Dendritic cell treated with granulocyte-macrophage colony-stimulating factor and Interleukin-4, amounts not matched to agents 40 ng/mL and 50 ng/mL, for 4 days (primary cell): ENCODE measurements at regions of chr22 and their contacts with region 1.

Region 1: GRCh38 chr22:38872172-38872830 is at the start of gene CBX6:
- H3K4me3 Mint-ChIP-seq: peak within 1 kb of the TSS; percentile 94
- H3K27ac Mint-ChIP-seq: peak within 1 kb of the TSS; percentile 98
- H3K4me1 Mint-ChIP-seq: peaks cover 50% of the 10 kb centered on the region
- H3K27me3 Mint-ChIP-seq: peaks cover 20% of the 10 kb centered on the region

Region 2: GRCh38 chr22:38927033-38927781 is 54.9 kb after region 1 on chr22:
- intact Hi-C with region 1: loop called (anchors 5 kb)
- H3K4me3 Mint-ChIP-seq: peak overlapping the region; percentile 47
- H3K27ac Mint-ChIP-seq: peak overlapping the region; percentile 5
- H3K4me1 Mint-ChIP-seq: peaks cover 12% of the 10 kb centered on the region
- H3K27me3 Mint-ChIP-seq: peaks cover 64% of the 10 kb centered on the region

Region 3: DNA sequence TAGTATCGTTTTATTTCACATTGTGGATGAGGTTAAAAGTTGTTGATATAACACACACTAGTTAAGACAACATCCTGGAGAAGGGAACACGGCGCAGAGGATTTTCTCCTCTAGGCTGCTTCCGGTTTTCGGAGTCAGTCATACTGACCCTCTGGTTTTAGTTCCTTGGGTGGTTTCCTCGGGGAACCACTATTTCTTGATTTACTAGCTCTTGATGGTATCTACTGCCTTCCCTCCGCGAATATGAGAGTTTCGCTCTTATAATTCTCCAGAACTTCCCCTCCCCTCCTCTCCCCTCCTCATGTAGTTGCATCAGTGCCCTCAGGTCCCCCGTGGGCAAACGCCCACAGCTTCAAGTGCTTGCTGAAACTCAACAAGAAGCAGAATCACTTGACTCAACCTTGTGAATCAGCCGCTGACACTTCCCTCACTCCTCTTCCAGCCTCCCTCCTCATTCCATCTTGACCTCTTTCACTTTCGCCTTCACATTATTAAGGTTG is 69.2 kb after region 1 on chr22:
- intact Hi-C with region 1: loop called (anchors 2 kb)
- H3K4me3 Mint-ChIP-seq: peak overlapping the region; percentile 68
- H3K27ac Mint-ChIP-seq: peak overlapping the region; percentile 87
- H3K4me1 Mint-ChIP-seq: peaks cover 82% of the 10 kb centered on the region
- H3K27me3 Mint-ChIP-seq: peaks cover 48% of the 10 kb centered on the region

Region 4: GRCh38 chr22:39003165-39003638 is 130.9 kb after region 1 on chr22:
- intact Hi-C with region 1: loop called (anchors 1 kb)
- H3K4me3 Mint-ChIP-seq: no peak overlapping the region
- H3K27ac Mint-ChIP-seq: no peak overlapping the region
- H3K4me1 Mint-ChIP-seq: peaks cover 15% of the 10 kb centered on the region
- H3K27me3 Mint-ChIP-seq: peaks cover 31% of the 10 kb centered on the region

Region 5: DNA sequence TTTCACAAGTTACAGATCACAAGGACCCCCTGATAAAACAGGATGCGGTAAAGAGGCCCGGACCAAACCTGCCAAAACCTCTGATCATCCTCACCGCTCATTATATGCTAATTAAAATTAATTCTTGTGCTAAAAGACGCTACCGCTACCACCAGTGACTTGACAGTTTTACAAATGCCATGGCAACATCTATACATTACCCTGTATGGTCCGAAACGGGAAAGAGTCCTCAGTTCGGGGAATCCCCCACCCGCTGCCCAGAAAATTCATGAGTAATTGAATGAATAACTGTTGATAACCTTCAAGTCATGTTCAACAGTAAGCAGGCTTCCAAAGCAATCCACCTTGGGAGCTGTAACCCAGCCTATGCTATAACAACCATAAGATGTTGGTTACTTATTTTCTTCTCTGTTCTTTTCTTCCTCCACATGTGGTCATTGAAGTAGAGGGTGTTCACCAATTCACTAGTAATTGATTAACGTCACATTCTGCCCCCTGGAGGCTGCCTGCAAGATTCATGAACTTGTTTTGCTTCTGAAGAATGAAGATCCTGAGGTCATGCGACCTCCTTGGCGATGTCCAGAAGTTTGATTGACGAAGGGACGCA is 245.4 kb after region 1 on chr22:
- intact Hi-C with region 1: loop called (anchors 5 kb)
- H3K4me3 Mint-ChIP-seq: no peak overlapping the region
- H3K27ac Mint-ChIP-seq: peak overlapping the region; percentile 52
- H3K4me1 Mint-ChIP-seq: peaks cover 29% of the 10 kb centered on the region
- H3K27me3 Mint-ChIP-seq: peaks cover 20% of the 10 kb centered on the region

Region 6: DNA sequence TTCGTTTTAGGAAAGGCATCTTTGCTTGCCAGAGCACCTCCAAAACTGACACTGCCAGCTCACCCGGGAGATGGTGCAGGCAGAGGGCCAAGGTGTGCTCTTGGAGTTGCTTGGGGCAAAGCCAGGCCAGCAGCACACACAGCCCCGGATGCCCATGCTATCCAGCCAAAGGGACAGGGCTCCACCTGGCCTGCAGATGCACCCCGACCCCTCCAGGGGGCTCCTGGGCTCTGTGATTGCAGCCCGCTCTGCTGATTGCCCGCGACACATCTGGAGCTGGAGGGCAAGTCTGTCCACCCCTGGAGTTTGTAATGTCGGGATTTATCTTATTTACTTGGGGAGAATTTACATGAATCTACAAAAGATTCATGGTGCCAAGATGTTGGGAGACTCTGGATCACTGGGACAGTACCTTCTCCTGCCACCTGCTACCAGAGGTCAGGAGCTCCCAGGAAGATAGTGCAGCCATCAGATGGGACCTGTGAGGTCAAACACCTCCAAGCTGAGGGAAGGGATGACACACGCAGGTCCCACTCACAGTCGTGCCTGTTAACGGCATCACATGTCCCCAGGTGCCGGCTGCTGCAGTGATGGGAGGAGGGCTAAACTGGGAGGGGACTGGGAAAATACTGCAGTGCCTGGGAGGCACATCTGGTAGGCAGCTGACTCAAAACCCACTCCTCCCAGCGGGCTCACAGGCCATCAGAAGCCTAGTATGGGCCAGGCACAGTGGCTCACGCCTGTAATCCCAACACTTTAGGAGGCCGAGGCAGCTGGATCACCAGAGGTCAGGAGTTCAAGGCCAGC is 263.0 kb after region 1 on chr22:
- intact Hi-C with region 1: no loop called
- H3K4me3 Mint-ChIP-seq: no peak overlapping the region
- H3K27ac Mint-ChIP-seq: peak overlapping the region; percentile 39
- H3K4me1 Mint-ChIP-seq: peaks cover 52% of the 10 kb centered on the region
- H3K27me3 Mint-ChIP-seq: peaks cover 11% of the 10 kb centered on the region

Region 7: GRCh38 chr22:39306581-39307361 is 434.5 kb after region 1 on chr22:
- intact Hi-C with region 1: loop called (anchors 10 kb)
- H3K4me3 Mint-ChIP-seq: no peak overlapping the region
- H3K27ac Mint-ChIP-seq: peak overlapping the region; percentile 54
- H3K4me1 Mint-ChIP-seq: peaks cover 64% of the 10 kb centered on the region
- H3K27me3 Mint-ChIP-seq: no peaks in the 10 kb centered on the region